Sigmoid colon (tissue), 7 donors: ENCODE measurements at regions of chr19 and their contacts with region 1.

Region 1: DNA sequence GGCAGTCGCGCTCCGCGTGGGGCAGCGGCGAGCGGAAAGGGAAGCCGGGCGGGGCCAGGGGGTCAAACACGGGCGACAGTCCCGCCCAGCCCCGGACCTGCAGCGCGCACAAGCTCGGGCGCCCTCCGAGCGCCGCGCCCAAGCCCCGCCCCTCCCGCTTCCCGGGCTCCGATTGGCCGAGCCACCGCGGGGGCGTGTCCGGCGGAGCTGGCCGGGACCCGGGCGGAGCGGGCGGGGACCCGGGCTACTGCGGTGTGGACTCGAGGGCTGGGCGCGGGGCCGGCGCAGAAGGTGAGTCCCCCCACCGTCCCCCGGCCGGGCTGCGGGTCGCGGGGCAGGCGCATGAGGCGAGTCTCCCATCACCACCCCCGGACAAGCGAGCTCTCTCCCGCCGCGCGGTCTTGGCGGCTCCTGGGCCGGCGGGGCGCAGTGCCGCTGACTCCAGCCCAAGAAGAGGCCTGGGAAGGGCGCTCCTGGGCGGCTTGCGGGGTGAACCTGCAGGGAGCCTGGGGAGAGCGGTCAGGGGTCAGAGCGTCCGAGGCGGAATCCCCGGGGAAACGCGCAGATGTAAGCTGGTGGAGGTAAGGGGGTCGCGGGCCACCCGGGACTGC is at the start of gene PLEKHF1:
- DNase-seq: peak; percentile 95
- H3K4me3 ChIP-seq: peak within 1 kb of the TSS; percentile 76 to 93 (median 85)
- H3K27ac ChIP-seq: peak within 1 kb of the TSS; percentile 84 to 93 (median 92)
- H3K4me1 ChIP-seq: peaks cover 0 to 82% (median 76%) of the 10 kb centered on the region in 4 donors
- H3K27me3 ChIP-seq: no peaks in the 10 kb centered on the region
- CTCF ChIP-seq: no peak
- EP300 ChIP-seq: no peak
- POLR2A ChIP-seq: no peak
- total RNA-seq, gene PLEKHF1: 19.4 to 34.6 (median 22.6) TPM

Region 2: DNA sequence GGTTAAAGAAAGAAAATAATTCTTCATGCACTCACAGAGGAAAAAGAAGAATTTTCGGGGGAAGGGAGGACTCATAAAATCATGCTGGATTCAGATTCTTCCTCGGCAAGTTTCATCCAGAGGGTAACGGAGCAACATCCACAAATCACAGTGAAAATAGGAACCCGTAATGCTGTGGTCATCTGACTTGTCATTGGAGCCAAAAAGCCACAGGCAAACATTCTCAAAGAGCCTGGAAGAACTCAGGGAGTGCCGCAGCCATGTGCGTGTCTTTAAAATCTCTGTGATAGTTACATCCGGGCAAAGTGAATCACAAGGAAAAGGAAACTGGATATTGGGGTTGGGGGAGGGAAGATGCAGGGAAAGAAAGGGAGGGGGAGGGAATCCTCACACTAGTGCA is 172.6 kb before region 1 on chr19:
- intact Hi-C with region 1: no loop called
- DNase-seq: peak; percentile 66
- H3K4me3 ChIP-seq: no peak overlapping the region
- H3K27ac ChIP-seq: peak overlapping the region in 1 of 4 donors; percentile 11
- H3K4me1 ChIP-seq: peaks cover 0 to 16% (median 5%) of the 10 kb centered on the region in 4 donors
- H3K27me3 ChIP-seq: no peaks in the 10 kb centered on the region
- CTCF ChIP-seq: no peak
- EP300 ChIP-seq: no peak
- POLR2A ChIP-seq: no peak

Region 3: DNA sequence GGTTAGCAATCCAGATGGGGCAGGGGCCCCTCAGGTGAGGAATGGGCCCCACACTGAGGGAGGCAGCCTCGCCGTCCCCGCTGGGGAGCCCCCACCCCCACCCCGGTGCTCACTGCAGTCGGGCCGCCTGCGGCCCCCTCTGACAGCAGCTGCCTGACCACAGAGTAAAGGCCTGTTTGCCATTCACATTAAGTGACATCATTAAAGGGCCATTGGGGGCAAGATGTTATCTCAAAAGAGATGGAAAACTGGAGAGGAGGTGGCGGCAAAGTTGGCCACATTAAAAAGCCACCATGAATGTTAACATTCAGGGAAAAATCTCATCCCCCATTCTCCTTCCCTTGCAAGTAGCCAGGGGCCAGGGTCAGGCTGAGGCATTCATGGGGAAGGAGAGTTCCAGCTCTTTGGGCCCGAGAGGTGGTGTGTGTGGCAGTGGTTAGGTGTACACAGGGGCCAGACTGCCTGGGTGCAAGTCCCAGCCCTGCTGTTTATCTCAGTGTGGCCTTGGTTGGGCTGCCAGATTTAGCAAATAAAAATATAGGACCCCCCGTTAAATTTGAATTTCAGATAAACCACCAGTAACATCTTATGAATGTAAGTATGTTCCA is 118.6 kb before region 1 on chr19:
- intact Hi-C with region 1: no loop called
- DNase-seq: peak; percentile 40
- H3K4me3 ChIP-seq: no peak overlapping the region
- H3K27ac ChIP-seq: no peak overlapping the region
- H3K4me1 ChIP-seq: no peaks in the 10 kb centered on the region
- H3K27me3 ChIP-seq: peaks cover 0 to 7% (median 0%) of the 10 kb centered on the region in 3 donors
- CTCF ChIP-seq: no peak
- EP300 ChIP-seq: no peak
- POLR2A ChIP-seq: no peak

Region 4: DNA sequence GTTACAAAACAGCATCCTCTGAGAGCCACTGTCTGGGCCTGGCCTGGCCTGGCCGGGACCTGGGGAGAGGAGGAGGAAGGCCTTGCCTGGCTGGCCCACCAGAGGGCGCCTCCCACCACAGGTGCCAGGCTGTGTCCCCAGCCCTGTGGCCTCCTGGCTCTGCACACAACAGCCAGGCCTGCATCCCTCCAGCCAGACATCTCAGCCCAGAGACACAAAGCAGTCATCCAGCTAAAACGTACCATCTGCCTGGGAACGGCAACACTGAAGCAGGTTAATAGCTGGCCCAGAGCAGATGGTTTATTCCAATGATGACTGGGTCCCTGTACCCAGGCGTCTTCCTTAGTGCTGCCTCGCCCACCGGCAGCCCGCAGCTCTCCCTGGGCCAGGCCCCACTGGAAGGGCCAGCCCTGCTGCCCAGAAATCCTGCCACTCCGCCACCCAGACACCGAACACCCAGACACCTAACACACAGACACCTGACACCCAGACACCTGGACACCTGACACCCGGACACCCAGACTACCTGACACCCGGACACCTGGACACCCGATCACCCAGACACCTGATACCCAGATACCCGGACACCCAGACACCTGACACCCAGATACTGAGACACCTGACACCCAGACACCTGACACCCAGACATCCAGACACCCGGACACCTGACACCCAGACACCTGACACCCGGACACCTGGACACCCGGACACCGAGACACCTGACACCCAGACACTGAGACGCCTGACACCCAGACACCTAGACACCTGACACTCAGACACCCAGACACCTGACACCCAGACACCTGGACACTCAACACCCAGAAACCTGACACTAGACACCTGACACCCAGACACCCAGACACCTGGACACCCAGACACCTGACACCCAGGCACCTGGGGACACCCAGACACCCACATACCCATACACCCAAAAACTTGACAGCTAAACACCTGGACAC is 29.6 kb after region 1 on chr19:
- intact Hi-C with region 1: loop called (anchors 2 kb)
- DNase-seq: peak; percentile 95
- H3K4me3 ChIP-seq: no peak overlapping the region
- H3K27ac ChIP-seq: peak overlapping the region; percentile 55 to 62 (median 60)
- H3K4me1 ChIP-seq: peaks cover 0 to 15% (median 14%) of the 10 kb centered on the region in 4 donors
- H3K27me3 ChIP-seq: no peaks in the 10 kb centered on the region
- CTCF ChIP-seq: peak; percentile 73 to 92 (median 81)
- EP300 ChIP-seq: no peak
- POLR2A ChIP-seq: no peak

Region 5: GRCh38 chr19:29714953-29715700 is 49.8 kb after region 1 on chr19 and contains the start of gene C19orf12:
- intact Hi-C with region 1: loop called (anchors 1 kb)
- DNase-seq: peak; percentile 76
- H3K4me3 ChIP-seq: peak within 1 kb of the TSS; percentile 73 to 98 (median 87)
- H3K27ac ChIP-seq: peak within 1 kb of the TSS; percentile 90 to 97 (median 92)
- H3K4me1 ChIP-seq: peaks cover 0 to 53% (median 34%) of the 10 kb centered on the region in 4 donors
- H3K27me3 ChIP-seq: no peaks in the 10 kb centered on the region
- CTCF ChIP-seq: no peak
- EP300 ChIP-seq: no peak
- POLR2A ChIP-seq: peak; percentile 38 to 68
- total RNA-seq, gene C19orf12: 32.1 to 36.0 (median 34.2) TPM

Region 6: DNA sequence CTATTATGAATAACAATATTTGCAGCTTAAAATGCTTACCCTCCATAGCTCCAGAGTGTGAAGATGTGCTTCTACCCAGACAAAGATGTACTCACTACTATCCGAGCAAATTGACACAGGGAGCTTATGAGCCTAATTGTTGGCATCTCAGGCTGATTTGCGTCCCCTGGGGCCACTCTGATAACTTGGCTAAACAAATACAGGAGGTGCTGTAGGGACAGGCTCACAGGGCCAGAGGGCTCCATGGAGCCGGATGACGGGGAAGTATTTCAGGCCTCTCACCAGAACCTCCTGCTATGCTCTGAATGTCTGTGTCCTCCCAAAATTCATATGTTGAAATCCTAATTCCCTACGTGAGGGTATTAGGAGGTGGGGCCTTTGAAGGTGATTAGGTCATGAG is 76.5 kb after region 1 on chr19:
- intact Hi-C with region 1: no loop called
- DNase-seq: no peak
- H3K4me3 ChIP-seq: no peak overlapping the region
- H3K27ac ChIP-seq: no peak overlapping the region
- H3K4me1 ChIP-seq: no peaks in the 10 kb centered on the region
- H3K27me3 ChIP-seq: peaks cover 0 to 7% (median 0%) of the 10 kb centered on the region in 3 donors
- CTCF ChIP-seq: no peak
- EP300 ChIP-seq: no peak
- POLR2A ChIP-seq: no peak

Region 7: GRCh38 chr19:29811125-29812079 is 146.1 kb after region 1 on chr19 and contains the start of gene CCNE1:
- intact Hi-C with region 1: loop called (anchors 2 kb)
- DNase-seq: peak; percentile 96
- H3K4me3 ChIP-seq: peak within 1 kb of the TSS; percentile 38 to 75 (median 60)
- H3K27ac ChIP-seq: peak within 1 kb of the TSS; percentile 55 to 73 (median 68)
- H3K4me1 ChIP-seq: peaks cover 0 to 15% (median 10%) of the 10 kb centered on the region in 4 donors
- H3K27me3 ChIP-seq: no peaks in the 10 kb centered on the region
- CTCF ChIP-seq: no peak
- EP300 ChIP-seq: no peak
- POLR2A ChIP-seq: no peak
- total RNA-seq, gene CCNE1: 2.3 to 13.8 (median 3.6) TPM

Region 8: GRCh38 chr19:29823581-29824325 is 158.4 kb after region 1 on chr19:
- intact Hi-C with region 1: no loop called
- DNase-seq: no peak
- H3K4me3 ChIP-seq: no peak overlapping the region
- H3K27ac ChIP-seq: no peak overlapping the region
- H3K4me1 ChIP-seq: no peaks in the 10 kb centered on the region
- H3K27me3 ChIP-seq: no peaks in the 10 kb centered on the region
- CTCF ChIP-seq: no peak
- EP300 ChIP-seq: no peak
- POLR2A ChIP-seq: no peak

Region 9: DNA sequence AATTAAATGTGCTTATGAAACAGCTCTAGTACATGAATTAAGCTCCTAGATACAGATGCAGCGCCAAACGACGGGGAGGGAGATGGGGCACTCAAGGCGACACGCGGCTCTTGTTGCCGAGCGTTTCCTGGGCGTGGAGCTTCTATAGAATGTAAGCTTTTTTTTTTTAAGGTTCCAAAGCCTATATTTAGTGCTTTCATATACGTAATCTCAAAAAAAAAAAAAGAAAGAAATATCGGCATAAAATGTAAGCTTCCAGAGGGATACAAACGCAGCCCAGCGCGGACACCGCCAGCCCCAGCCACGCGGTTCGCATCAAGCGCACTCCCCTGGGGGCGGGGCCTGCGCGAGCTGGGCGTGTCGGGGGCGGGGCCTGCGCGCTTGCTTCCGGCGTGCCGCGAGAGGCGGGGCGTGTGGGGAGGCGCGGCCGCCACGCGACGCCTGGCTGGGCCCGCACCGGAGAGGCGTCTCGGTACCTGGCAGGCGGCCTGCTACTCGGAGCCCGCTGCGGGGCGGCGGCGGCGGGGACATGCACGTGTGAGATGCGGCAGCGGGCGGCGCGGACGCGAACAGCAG is 276.6 kb after region 1 on chr19 and contains the start of gene URI1:
- intact Hi-C with region 1: loop called (anchors 5 kb)
- DNase-seq: peak; percentile 94
- H3K4me3 ChIP-seq: peak within 1 kb of the TSS; percentile 74 to 93 (median 88)
- H3K27ac ChIP-seq: peak within 1 kb of the TSS; percentile 80 to 84 (median 82)
- H3K4me1 ChIP-seq: peaks cover 0 to 44% (median 35%) of the 10 kb centered on the region in 4 donors
- H3K27me3 ChIP-seq: no peaks in the 10 kb centered on the region
- CTCF ChIP-seq: no peak
- EP300 ChIP-seq: no peak
- POLR2A ChIP-seq: no peak
- total RNA-seq, gene URI1: 54.6 to 69.2 (median 60.6) TPM